A673 (cell line): ENCODE measurements at regions of chr6 and their contacts with region 1.

Region 1: GRCh38 chr6:2988426-2989331 is 11.0 kb upstream of the NQO2 start:
- DNase-seq: peak; percentile 93
- H3K4me3 ChIP-seq: peak overlapping the region; percentile 56
- H3K27ac ChIP-seq: peak overlapping the region; percentile 97
- H3K4me1 ChIP-seq: peaks cover 12% of the 10 kb centered on the region
- H3K27me3 ChIP-seq: no peaks in the 10 kb centered on the region
- CTCF ChIP-seq: peak; percentile 60

Region 2: GRCh38 chr6:2738373-2738979 is 250.2 kb before region 1 on chr6:
- CTCF ChIA-PET with region 1: interaction called, 7 read pairs
- POLR2A ChIA-PET with region 1: no interaction called
- intact Hi-C with region 1: loop called (anchors 5 kb)
- DNase-seq: peak; percentile 88
- H3K4me3 ChIP-seq: no peak overlapping the region
- H3K27ac ChIP-seq: no peak overlapping the region
- H3K4me1 ChIP-seq: no peaks in the 10 kb centered on the region
- H3K27me3 ChIP-seq: no peaks in the 10 kb centered on the region
- CTCF ChIP-seq: peak; percentile 91

Region 3: GRCh38 chr6:2791124-2791974 is 197.3 kb before region 1 on chr6:
- CTCF ChIA-PET with region 1: no interaction called
- POLR2A ChIA-PET with region 1: no interaction called
- intact Hi-C with region 1: loop called (anchors 5 kb)
- DNase-seq: peak; percentile 78
- H3K4me3 ChIP-seq: no peak overlapping the region
- H3K27ac ChIP-seq: no peak overlapping the region
- H3K4me1 ChIP-seq: peaks cover 17% of the 10 kb centered on the region
- H3K27me3 ChIP-seq: no peaks in the 10 kb centered on the region
- CTCF ChIP-seq: peak; percentile 87

Region 4: GRCh38 chr6:2952557-2953095 is 36.1 kb before region 1 on chr6:
- CTCF ChIA-PET with region 1: interaction called, 21 read pairs
- POLR2A ChIA-PET with region 1: interaction called, 3 read pairs
- intact Hi-C with region 1: loop called (anchors 2 kb)
- DNase-seq: peak; percentile 89
- H3K4me3 ChIP-seq: no peak overlapping the region
- H3K27ac ChIP-seq: no peak overlapping the region
- H3K4me1 ChIP-seq: peaks cover 5% of the 10 kb centered on the region
- H3K27me3 ChIP-seq: no peaks in the 10 kb centered on the region
- CTCF ChIP-seq: peak; percentile 100

Region 5: GRCh38 chr6:2971420-2972218 is 17.1 kb before region 1 on chr6 and contains the start of gene SERPINB6:
- CTCF ChIA-PET with region 1: interaction called, 13 read pairs
- POLR2A ChIA-PET with region 1: interaction called, 6 read pairs
- intact Hi-C with region 1: no loop called
- DNase-seq: peak; percentile 58
- H3K4me3 ChIP-seq: peak within 1 kb of the TSS; percentile 63
- H3K27ac ChIP-seq: peak within 1 kb of the TSS; percentile 71
- H3K4me1 ChIP-seq: no peaks in the 10 kb centered on the region
- H3K27me3 ChIP-seq: no peaks in the 10 kb centered on the region
- CTCF ChIP-seq: 0 out of 2 replicates have a peak, but pooled peaks have one; percentile 18
- total RNA-seq, gene SERPINB6: 34.8 and 37.5 TPM in 2 replicates

Region 6: GRCh38 chr6:3410385-3411360 is 422.0 kb after region 1 on chr6:
- CTCF ChIA-PET with region 1: no interaction called
- POLR2A ChIA-PET with region 1: no interaction called
- intact Hi-C with region 1: no loop called
- DNase-seq: peak; percentile 84
- H3K4me3 ChIP-seq: no peak overlapping the region
- H3K27ac ChIP-seq: no peak overlapping the region
- H3K4me1 ChIP-seq: no peaks in the 10 kb centered on the region
- H3K27me3 ChIP-seq: no peaks in the 10 kb centered on the region
- CTCF ChIP-seq: peak; percentile 94